OCI-LY7 (cell line): ENCODE measurements at regions of chr12 and their contacts with region 1.

Region 1: DNA sequence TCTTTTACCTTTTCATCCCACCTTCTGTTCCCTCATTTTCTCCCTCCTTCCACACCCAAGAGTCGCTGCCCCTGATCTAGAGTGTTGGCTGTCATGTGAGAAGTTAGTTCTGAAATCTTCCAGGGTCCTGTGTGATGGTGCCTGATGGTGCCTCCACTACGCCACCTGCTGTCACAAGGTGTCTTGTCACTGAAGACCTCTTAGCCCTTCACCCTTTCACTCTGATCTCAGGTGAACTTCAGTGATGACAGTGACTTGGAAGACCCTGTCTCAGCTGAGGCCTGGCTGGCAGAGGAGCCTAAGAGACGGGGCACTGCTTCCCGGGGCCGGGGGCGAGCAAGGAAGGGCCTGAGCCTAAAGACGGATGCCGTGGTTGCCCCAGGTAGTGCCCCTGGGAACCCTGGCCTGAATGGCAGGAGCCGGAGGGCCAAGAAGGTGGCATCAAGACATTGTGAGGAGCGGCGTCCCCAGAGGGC is 7.6 kb upstream of the PFDN5 start:
- DNase-seq: peak; percentile 73
- H3K4me3 ChIP-seq: no peak overlapping the region
- H3K27ac ChIP-seq: no peak overlapping the region
- H3K4me1 ChIP-seq: no peaks in the 10 kb centered on the region
- CTCF ChIP-seq: peak; percentile 90

Region 2: DNA sequence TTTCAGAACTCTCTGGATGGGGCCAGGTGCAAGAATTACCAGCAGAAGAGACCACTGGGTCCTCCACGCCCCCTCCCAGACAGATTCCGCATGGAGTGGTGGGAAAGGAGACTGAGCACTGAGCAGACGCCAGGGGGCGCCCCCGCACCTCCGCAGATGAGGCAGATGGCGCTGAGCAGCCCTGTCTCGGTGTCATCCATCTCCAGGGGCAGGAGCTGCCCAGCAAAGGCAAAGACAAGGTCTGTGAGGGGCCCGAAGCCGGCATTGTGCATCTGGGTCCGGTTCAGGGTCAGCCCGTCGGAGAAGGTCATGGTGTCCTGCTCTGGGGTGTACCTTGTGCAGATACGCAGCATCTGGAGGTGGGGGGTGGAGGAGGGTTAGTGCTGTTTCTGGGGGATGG is 74.4 kb before region 1 on chr12:
- CTCF ChIA-PET with region 1: interaction called, 4 read pairs
- POLR2A ChIA-PET with region 1: interaction called, 4 read pairs
- intact Hi-C with region 1: loop called (anchors 1 kb)
- DNase-seq: peak; percentile 86
- H3K4me3 ChIP-seq: no peak overlapping the region
- H3K27ac ChIP-seq: no peak overlapping the region
- H3K4me1 ChIP-seq: peaks cover 87% of the 10 kb centered on the region
- CTCF ChIP-seq: peak; percentile 94